Mammary epithelial cell (primary cell): ENCODE measurements at regions of chr2 and their contacts with region 1.

Region 1: GRCh38 chr2:157257312-157258252 is at the start of gene GALNT5:
- DNase-seq: peak; percentile 79
- H3K4me3 ChIP-seq: peak within 1 kb of the TSS; percentile 51 to 61 (median 52)
- H3K27ac ChIP-seq: peak within 1 kb of the TSS; percentile 71
- H3K4me1 ChIP-seq: peaks cover 44% of the 10 kb centered on the region
- H3K27me3 ChIP-seq: no peaks in the 10 kb centered on the region
- CTCF ChIP-seq: no peak
- total RNA-seq, gene GALNT5: 12.7 to 33.7 TPM

Region 2: DNA sequence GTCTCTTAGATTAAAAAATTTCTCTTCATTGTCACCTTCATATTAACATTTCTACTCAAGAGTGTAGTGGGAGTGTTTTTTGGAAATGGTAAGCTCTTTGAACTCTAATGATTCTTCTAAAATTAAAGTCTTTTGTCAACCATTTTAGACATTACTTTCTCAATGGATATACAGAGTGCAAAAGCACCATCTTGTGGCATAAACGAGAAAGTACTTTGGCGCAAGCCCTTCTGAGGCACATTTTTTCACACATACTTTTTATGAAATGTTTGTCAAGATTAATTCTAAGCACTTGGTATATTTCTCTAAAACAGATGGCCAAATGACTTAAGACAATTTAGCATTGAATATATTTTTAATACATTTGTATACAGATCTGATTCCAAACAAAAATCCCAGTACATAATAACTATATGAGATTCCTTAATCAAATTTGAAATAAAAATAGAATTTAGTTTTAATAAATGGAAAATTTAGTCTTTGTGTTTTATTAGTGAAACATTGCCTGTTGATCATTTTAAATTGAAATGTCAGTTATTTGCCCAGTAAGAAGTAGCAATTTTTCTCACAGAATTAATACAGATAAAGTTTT is 63.4 kb before region 1 on chr2:
- CTCF ChIA-PET with region 1: no interaction called
- dilution Hi-C with region 1: no loop called
- in situ Hi-C with region 1: no loop called
- intact Hi-C with region 1: loop called (anchors 2 kb)
- DNase-seq: peak; percentile 49
- H3K4me3 ChIP-seq: no peak overlapping the region
- H3K27ac ChIP-seq: no peak overlapping the region
- H3K4me1 ChIP-seq: no peaks in the 10 kb centered on the region
- H3K27me3 ChIP-seq: no peaks in the 10 kb centered on the region
- CTCF ChIP-seq: peak; percentile 75 to 84

Region 3: GRCh38 chr2:157245846-157246764 is 11.5 kb before region 1 on chr2:
- CTCF ChIA-PET with region 1: interaction called, 4 read pairs
- dilution Hi-C with region 1: no loop called
- in situ Hi-C with region 1: no loop called
- intact Hi-C with region 1: loop called (anchors 1 kb)
- DNase-seq: peak; percentile 97
- H3K4me3 ChIP-seq: no peak overlapping the region
- H3K27ac ChIP-seq: peak overlapping the region; percentile 100
- H3K4me1 ChIP-seq: peaks cover 28% of the 10 kb centered on the region
- H3K27me3 ChIP-seq: no peaks in the 10 kb centered on the region
- CTCF ChIP-seq: no peak